A673 (cell line): ENCODE measurements at regions of chr1 and their contacts with region 1.

Region 1: DNA sequence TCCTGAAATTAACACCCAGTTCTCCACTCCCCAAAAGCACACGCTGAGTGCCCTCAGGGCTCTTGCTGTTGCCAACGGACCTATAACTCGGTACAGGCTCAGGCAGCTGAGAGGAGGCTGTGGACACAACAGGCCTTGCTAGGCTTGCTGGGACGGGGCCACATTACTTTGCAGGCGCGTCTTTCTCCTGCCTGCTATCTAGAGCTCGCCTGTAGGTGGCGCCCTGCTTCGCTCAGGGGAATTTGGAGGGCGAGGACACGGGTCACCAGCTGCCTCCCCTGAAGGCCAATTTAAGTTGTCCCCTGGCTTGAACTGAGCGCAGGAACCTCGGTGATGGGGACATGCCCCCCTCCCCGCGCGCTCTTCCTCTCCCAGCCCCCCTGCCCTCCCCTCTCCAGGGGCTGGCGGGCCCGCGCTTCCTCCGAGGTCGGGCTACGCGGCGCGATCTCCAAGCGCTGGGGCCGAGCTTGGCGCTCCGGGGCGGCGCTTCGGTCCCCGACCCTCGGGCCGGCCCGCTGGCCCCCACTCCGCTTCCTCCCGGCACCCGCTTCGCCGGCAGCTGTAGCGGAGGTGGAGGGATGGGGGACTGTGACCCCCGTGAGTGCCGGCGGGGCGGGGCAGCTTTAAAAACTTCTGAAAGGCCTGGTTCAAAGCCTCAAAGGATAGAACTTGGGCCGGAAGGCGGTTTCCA is 32.4 kb upstream of the NFIA start:
- DNase-seq: peak; percentile 93
- H3K4me3 ChIP-seq: peak overlapping the region; percentile 82
- H3K27ac ChIP-seq: peak overlapping the region; percentile 86
- H3K4me1 ChIP-seq: peaks cover 8% of the 10 kb centered on the region
- H3K27me3 ChIP-seq: no peaks in the 10 kb centered on the region
- CTCF ChIP-seq: peak; percentile 97

Region 2: DNA sequence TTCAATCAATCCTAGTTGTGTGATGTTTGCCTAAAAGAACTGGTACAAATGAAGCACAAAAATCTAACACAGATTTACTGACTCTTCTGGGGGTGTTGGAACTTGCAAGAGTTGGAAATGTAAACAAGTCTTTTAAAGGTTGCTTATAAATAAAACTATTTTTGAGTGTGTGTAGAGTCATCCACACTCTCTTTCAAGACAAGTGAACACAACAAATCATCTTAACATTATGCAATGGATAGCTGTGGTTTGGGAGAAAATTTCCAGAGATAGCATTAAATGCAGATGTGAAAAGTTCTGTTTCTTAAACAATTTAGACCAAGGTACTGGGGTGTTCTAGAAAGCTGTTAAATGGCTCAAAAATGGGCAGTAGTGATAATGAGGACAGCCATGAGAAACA is 1005.1 kb before region 1 on chr1:
- CTCF ChIA-PET with region 1: no interaction called
- POLR2A ChIA-PET with region 1: no interaction called
- intact Hi-C with region 1: no loop called
- DNase-seq: no peak
- H3K4me3 ChIP-seq: no peak overlapping the region
- H3K27ac ChIP-seq: no peak overlapping the region
- H3K4me1 ChIP-seq: no peaks in the 10 kb centered on the region
- H3K27me3 ChIP-seq: no peaks in the 10 kb centered on the region
- CTCF ChIP-seq: no peak

Region 3: DNA sequence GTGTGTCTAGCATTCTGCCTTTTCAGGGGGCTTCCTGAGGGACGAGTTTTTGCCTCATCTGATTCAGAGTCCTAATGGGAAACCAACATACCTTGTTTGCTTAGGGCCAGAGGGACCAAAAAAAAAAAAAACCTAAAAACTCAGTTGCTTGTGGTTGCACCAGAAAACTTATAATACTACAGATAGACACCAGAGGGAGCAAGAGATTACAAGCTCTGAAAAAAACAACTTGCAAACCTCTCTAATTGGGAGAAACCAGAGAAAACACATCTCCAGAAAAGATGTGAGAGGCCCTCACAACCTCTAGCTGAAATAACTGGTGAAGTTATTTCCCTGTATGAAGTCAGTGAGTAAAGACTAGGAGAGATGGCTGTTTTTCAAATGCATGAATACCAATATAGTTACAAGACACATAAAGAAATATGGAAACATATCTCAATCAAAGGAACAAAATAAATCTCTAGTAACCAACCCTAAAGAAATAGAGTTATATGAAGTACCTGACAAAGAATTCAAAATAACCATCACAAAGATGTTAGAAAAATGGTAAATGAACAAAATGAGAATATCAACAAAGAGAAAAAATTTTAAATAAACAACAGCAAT is 201.3 kb before region 1 on chr1:
- CTCF ChIA-PET with region 1: no interaction called
- POLR2A ChIA-PET with region 1: no interaction called
- intact Hi-C with region 1: no loop called
- DNase-seq: peak; percentile 68
- H3K4me3 ChIP-seq: no peak overlapping the region
- H3K27ac ChIP-seq: no peak overlapping the region
- H3K4me1 ChIP-seq: no peaks in the 10 kb centered on the region
- H3K27me3 ChIP-seq: no peaks in the 10 kb centered on the region
- CTCF ChIP-seq: peak; percentile 69

Region 4: DNA sequence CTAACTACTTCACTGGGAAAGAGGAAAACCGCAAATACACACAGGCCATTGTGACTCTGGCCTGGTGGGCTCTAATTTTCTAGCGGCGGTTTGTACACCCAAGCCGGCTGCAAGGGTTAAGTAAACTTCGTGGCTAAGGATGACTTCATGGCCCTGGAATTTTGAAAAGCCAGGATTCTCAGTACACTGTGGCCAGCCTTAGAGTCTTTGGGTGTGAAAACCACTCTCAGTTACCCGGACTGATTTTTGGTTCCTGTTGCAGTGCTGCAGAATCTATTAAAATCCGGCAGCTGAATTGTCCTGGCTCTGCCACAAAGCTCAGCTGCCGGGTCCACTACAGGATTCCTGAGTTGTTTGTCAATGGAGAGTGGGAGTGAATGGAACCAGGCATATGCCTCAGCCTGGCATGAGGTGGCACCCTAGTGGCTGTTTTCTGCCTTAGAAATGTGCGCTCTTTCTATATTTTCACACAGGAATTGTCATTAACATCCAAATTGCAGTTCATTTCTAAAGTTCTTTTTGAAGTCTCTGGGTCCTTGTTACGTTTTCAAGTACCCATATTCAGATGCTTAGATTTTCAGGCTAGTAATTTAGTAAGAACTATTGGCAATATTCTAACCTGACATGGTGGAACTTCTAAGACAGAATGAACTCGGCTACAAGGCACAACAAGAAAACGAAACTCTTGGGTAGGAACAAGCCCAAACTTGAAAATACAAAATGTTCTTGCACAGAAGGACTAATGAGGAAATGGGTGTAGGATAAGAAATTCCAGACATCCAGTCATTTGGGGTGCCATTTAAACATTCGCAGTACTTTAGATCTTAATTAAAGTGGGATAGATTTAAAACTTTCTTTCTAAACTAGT is 288.2 kb after region 1 on chr1:
- CTCF ChIA-PET with region 1: no interaction called
- POLR2A ChIA-PET with region 1: no interaction called
- intact Hi-C with region 1: loop called (anchors 2 kb)
- DNase-seq: peak; percentile 87
- H3K4me3 ChIP-seq: peak overlapping the region; percentile 33
- H3K27ac ChIP-seq: peak overlapping the region; percentile 69
- H3K4me1 ChIP-seq: peaks cover 39% of the 10 kb centered on the region
- H3K27me3 ChIP-seq: no peaks in the 10 kb centered on the region
- CTCF ChIP-seq: peak; percentile 86

Region 5: DNA sequence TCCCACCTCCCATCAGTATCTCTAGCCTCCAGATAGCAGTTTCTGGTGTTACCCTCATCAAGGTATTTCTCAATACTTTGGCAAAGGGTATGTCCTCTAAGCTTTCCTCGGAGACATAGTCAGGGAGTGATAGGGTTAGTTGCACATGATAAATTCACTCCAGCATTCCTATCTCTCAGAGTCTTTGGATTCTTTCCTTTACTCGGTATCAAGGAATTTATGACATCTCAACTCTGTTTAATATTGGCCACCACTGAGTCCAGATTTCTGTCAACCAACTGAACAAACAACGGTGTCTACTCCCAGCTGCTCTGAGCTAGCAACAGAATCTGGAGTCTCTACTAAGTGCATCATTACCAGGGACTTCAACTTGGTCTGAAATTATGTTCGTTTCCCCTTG is 441.5 kb after region 1 on chr1:
- CTCF ChIA-PET with region 1: interaction called, 10 read pairs
- POLR2A ChIA-PET with region 1: no interaction called
- intact Hi-C with region 1: no loop called
- DNase-seq: no peak
- H3K4me3 ChIP-seq: no peak overlapping the region
- H3K27ac ChIP-seq: no peak overlapping the region
- H3K4me1 ChIP-seq: no peaks in the 10 kb centered on the region
- H3K27me3 ChIP-seq: no peaks in the 10 kb centered on the region
- CTCF ChIP-seq: no peak